ENCODE measurements at regions of chr17 and their contacts with region 1.

Region 1: DNA sequence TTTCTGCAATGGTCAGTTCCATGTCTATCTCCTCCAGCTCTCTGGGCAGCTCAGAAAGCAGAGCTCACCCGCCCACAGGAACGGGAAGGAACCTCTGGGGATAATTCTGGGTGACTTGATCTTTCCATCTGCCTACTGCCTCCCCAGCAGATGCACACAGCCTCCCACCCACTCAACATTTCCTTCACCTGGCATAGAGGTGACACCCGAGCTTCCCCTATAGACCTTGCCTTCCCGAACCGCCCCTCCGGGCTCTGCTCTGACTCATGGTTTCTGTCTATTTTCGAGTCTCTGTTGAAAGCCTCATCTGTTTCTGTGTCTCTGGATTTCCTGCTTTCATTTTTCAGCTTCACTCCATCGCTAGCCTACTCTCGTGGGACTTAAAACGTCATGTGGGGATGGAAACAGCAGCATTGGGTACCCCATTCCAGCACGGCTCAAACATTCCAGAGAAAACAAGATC is 11.4 kb downstream of the GGA3 start:
- DNase-seq: peak in 1 of 4 experiments; percentile 23
- ATAC-seq: peak; percentile 45; the same call in 2 of the 3 replicates
- H3K4me3 ChIP-seq: no peak overlapping the region
- H3K27ac ChIP-seq: no peak overlapping the region
- H3K4me1 ChIP-seq: peaks cover 5 to 22% of the 10 kb centered on the region in 2 experiments; a peak in 4 of 5 replicates
- H3K27me3 ChIP-seq: no peaks in the 10 kb centered on the region
- CTCF ChIP-seq: no peak
- EP300 ChIP-seq: no peak
- POLR2A ChIP-seq: no peak
- RAD21 ChIP-seq: no peak

Region 2: GRCh38 chr17:75069783-75070182 is 180.3 kb before region 1 on chr17:
- CTCF ChIA-PET with region 1: no interaction called
- POLR2A ChIA-PET with region 1: no interaction called
- in situ Hi-C with region 1: no loop called
- intact Hi-C with region 1: no loop called
- DNase-seq: no peak
- ATAC-seq: no peak
- H3K4me3 ChIP-seq: no peak overlapping the region
- H3K27ac ChIP-seq: no peak overlapping the region
- H3K4me1 ChIP-seq: peaks cover 30 to 31% of the 10 kb centered on the region in 2 experiments
- H3K27me3 ChIP-seq: no peaks in the 10 kb centered on the region
- CTCF ChIP-seq: peak in 2 of 3 experiments; percentile 21 to 36; a peak in 2 of 6 replicates
- EP300 ChIP-seq: no peak
- POLR2A ChIP-seq: no peak
- RAD21 ChIP-seq: peak; percentile 51 to 56

Region 3: GRCh38 chr17:75261336-75262111 is 11.5 kb after region 1 on chr17 and contains the starts of genes GGA3 and MRPS7:
- CTCF ChIA-PET with region 1: no interaction called
- POLR2A ChIA-PET with region 1: interaction called, 85 read pairs
- in situ Hi-C with region 1: no loop called
- intact Hi-C with region 1: no loop called
- DNase-seq: peak; percentile 86 to 97 (median 94)
- ATAC-seq: peak; percentile 96
- H3K4me3 ChIP-seq: peak within 1 kb of the TSS; percentile 91
- H3K27ac ChIP-seq: peak within 1 kb of the TSS; percentile 93
- H3K4me1 ChIP-seq: peaks cover 20 to 23% of the 10 kb centered on the region in 2 experiments; a peak in 4 of 5 replicates
- H3K27me3 ChIP-seq: no peaks in the 10 kb centered on the region
- CTCF ChIP-seq: peak in 1 of 3 experiments; percentile 14; a peak in 2 of 6 replicates
- EP300 ChIP-seq: no peak
- POLR2A ChIP-seq: peak; percentile 95
- RAD21 ChIP-seq: 0 out of 4 replicates have a peak, but pooled peaks have one; percentile 2 to 16
- polyA plus RNA-seq, gene GGA3: 5.7 to 6.3 TPM
- polyA plus RNA-seq, gene MRPS7: 236 to 244 TPM

Measured in K562 (cell line).